Mammary epithelial cell (primary cell): ENCODE measurements at regions of chr5 and their contacts with region 1.

Region 1: DNA sequence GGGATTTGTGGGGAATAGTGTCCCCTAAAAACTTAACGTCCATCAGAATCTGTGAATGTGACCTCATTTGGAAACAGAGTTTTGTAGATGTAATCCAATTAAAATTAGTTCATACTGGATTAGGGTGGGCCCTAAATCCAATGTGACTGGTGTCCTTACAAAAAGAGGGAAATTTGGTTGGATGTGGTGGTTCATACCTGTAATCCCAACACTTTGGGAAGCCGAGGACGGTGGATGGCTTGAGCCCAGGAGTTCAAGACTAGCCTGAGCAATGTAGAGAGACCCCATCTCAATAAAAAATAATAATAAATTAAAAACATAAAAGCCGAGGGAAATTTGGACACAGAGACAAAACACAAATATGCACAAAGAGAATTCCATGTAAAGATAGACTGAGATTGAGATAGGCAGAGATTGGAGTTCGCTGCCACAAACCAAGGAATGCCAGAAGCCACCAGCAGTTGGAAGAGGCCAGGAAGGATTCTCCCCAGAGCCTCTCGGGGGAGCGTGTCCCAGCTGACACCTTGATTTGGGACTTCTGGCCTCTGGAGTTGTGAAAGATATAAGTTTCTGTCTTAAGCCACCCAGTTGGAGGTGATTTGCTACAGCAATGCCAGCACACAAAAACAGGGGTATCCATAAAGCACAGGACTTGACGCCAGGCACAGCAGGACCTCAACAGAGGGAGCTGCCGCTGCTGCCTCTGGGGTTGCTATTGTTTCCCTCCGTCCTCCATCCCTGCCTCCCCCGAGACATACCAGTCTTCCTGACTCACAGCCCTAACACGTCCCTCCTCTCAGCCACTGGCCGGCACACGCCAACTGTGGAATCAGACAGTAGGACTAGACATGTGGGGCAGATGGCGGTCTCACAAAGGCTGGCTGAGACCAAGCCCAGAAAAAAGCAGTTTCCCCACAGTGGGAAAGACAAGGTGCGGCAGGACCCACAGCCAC is 73.8 kb upstream of the IL17B start:
- DNase-seq: peak; percentile 90
- H3K4me3 ChIP-seq: no peak overlapping the region
- H3K27ac ChIP-seq: peak overlapping the region; percentile 86
- H3K4me1 ChIP-seq: peaks cover 48% of the 10 kb centered on the region
- H3K27me3 ChIP-seq: no peaks in the 10 kb centered on the region
- CTCF ChIP-seq: peak in 1 of 2 donors; percentile 33

Region 2: GRCh38 chr5:149063017-149063687 is 389.8 kb before region 1 on chr5 and contains the start of gene SH3TC2:
- CTCF ChIA-PET with region 1: no interaction called
- dilution Hi-C with region 1: no loop called
- in situ Hi-C with region 1: no loop called
- intact Hi-C with region 1: no loop called
- DNase-seq: peak; percentile 87
- H3K4me3 ChIP-seq: peak within 1 kb of the TSS in 2 of 3 experiments; percentile 19 to 41
- H3K27ac ChIP-seq: peak within 1 kb of the TSS; percentile 84
- H3K4me1 ChIP-seq: peaks cover 53% of the 10 kb centered on the region
- H3K27me3 ChIP-seq: no peaks in the 10 kb centered on the region
- CTCF ChIP-seq: no peak
- total RNA-seq, gene SH3TC2: 42.0 to 57.8 TPM

Region 3: GRCh38 chr5:149464796-149465489 is 12.0 kb after region 1 on chr5:
- CTCF ChIA-PET with region 1: no interaction called
- dilution Hi-C with region 1: no loop called
- in situ Hi-C with region 1: no loop called
- intact Hi-C with region 1: loop called (anchors 1 kb)
- DNase-seq: no peak
- H3K4me3 ChIP-seq: no peak overlapping the region
- H3K27ac ChIP-seq: no peak overlapping the region
- H3K4me1 ChIP-seq: peaks cover 4% of the 10 kb centered on the region
- H3K27me3 ChIP-seq: no peaks in the 10 kb centered on the region
- CTCF ChIP-seq: no peak